AG04450 (cell line): ENCODE measurements at regions of chr15 and their contacts with region 1.

Region 1: GRCh38 chr15:30859091-30859874 is 44.4 kb upstream of the FAN1 start:
- DNase-seq: peak; percentile 11
- H3K4me3 ChIP-seq: no peak overlapping the region
- H3K27ac ChIP-seq: no peak overlapping the region
- H3K27me3 ChIP-seq: no peaks in the 10 kb centered on the region
- CTCF ChIP-seq: peak; percentile 82

Region 2: DNA sequence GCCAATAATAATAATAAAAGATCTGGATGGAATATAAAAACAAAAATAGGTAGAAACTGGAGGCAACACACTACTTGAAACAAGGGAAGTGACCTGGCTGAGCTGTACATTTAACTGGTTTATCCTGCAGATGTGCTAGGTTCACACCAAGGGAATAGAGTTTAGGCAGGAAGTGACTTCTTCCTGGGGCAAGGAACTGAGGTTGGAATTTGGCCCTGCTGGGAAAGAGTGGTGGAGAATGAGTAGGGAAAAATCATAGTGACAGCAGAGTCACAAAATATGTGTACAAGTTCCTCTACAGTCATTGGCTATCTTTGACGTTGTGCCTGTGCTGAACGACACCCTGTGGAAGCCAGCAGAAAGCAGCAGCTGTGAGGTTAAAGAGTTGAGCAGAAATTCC is 189.2 kb before region 1 on chr15:
- CTCF ChIA-PET with region 1: interaction called, 30 read pairs
- POLR2A ChIA-PET with region 1: no interaction called
- DNase-seq: no peak
- H3K4me3 ChIP-seq: no peak overlapping the region
- H3K27ac ChIP-seq: no peak overlapping the region
- H3K27me3 ChIP-seq: no peaks in the 10 kb centered on the region
- CTCF ChIP-seq: no peak; the same call in 1 of the 2 replicates

Region 3: GRCh38 chr15:30870681-30871080 is 11.4 kb after region 1 on chr15:
- CTCF ChIA-PET with region 1: interaction called, 10 read pairs
- POLR2A ChIA-PET with region 1: no interaction called
- DNase-seq: no peak
- H3K4me3 ChIP-seq: no peak overlapping the region
- H3K27ac ChIP-seq: no peak overlapping the region
- H3K27me3 ChIP-seq: peaks cover 3% of the 10 kb centered on the region
- CTCF ChIP-seq: no peak